Left cardiac atrium (tissue), 4 donors: ENCODE measurements at regions of chr1 and their contacts with region 1.

Region 1: DNA sequence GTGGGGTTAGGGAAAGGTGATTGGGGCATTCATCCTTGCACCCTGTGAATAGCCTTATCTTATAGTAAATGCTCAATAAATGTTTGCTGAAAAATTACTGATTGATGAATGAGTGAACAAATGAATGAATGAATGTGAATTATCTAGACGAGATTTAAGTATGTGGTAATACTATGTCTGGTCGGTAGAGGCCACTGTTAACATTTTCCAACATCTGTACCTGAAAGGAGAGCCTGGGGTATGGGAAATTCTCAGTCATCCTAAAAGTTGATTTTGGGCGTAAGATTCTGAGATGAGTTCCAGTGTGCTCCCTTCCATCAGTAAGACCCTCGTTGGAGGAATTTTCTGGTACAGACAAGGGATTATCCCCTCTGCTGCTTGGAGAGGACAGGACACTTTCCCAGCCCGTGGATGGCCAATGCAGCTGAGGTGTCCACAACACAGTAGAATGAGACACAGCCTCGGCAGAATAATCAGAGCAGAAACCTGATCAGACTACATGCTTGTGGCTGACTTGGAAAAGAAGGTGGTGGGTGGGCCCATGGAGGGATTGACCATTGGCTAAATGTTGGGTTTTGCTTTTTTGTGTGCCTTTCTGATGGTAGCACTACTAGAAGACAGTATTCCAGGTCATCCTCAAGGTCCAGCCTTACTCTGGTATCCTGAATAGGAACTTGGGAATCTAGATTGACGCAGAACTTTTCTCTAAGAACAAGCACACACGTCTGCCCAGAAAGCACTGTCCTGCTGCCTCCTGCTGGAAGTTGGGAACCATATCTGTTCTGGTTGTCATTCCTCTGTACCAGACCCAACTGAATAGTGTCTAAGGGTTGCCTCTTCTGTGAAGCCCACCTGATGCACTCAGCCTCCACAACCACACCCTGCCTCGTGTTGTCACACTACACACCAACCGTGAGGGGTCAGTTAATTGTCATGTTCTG is 262.0 kb downstream of the TNR start:
- DNase-seq: no peak
- ATAC-seq: peak in 1 of 2 donors; percentile 38

Region 2: DNA sequence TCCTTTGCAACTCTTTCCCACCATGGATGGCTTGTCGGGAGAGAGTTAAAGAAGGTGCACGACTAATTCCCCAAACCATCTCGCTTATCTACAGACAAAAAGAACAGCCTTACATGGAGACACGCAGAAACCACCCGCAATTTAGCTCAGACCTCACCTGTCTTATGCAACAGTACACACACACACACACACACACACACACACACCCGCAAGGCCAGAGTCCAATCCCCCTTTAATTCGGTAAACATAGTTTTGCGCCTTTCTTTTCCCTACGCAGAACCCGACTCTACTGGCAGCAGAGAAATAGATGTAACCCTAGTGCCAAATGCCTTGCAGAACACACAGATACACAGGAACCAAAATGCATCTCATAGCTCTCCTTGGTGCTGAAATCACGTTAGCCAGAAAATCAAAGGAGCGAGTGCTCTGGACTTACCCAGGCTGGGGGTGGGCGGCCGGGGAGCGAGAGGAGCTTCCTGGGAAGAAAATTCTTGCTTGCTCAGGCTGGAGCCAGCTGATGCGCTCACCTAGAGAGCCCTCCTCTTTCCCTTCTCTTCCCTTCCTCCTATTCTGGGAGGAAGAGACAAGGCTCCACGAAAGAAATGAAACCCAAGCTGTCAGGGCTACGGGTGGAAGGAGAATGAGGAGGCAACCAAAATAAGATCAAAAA is 261.5 kb after region 1 on chr1:
- intact Hi-C with region 1: loop called in 1 of 2 experiments (anchors 5 kb)
- DNase-seq: no peak
- ATAC-seq: peak; percentile 38 to 65

Region 3: GRCh38 chr1:175887981-175888433 is 406.6 kb after region 1 on chr1:
- intact Hi-C with region 1: loop called (anchors 5 to 10 kb)
- DNase-seq: peak; percentile 65
- ATAC-seq: peak; percentile 90 to 91